ENCODE measurements at regions of chr2 and their contacts with region 1.

Region 1: GRCh38 chr2:30410217-30410616 is 36.8 kb upstream of the LCLAT1 start:
- DNase-seq: no peak

Region 2: DNA sequence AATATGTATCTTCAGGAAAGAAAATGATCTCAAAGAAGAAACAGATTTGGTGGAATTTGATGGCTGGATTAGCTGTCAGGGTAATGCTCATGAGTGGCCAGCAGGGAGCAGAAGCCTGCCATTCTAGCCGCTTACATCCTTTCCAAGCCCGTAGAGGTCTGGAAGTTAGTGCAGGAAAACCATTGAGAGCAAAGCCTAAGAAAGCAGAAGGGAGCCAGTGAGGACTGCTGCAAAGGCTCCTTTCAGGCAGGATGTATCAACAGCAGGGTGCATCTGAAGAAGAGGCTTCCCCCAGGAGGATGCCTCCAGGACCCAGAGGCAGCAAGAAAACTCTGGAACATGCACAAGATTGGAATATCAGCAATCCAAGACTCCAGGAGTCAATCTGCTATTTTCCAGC is 201.8 kb before region 1 on chr2:
- intact Hi-C with region 1: loop called (anchors 5 kb)
- DNase-seq: no peak

Region 3: GRCh38 chr2:30300456-30301221 is 109.6 kb before region 1 on chr2:
- intact Hi-C with region 1: loop called (anchors 2 kb)
- DNase-seq: peak; percentile 74

Region 4: GRCh38 chr2:30362468-30363081 is 47.6 kb before region 1 on chr2:
- intact Hi-C with region 1: loop called (anchors 1 kb)
- DNase-seq: no peak

Region 5: GRCh38 chr2:30421604-30422443 is 11.6 kb after region 1 on chr2:
- intact Hi-C with region 1: no loop called
- DNase-seq: no peak

Region 6: DNA sequence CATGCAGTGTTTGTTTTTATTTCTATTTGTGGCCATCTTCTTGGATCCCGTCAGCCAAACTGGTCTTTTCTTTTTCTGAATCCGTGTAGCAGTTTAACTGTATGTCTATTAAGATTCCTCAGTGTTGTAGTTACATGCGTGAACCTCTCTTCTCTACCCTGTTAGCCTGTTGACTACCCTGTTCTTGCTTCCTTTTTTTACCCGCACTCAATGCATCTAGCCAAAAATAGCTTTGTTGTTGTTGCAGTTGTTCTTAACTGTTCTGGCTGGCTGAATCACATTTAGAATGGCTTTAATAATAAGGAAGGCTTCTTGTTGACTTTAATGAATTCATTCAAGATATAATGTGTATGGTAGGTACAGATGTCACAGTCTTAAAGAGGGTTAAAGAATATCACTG is 173.9 kb after region 1 on chr2:
- intact Hi-C with region 1: loop called (anchors 10 kb)
- DNase-seq: no peak